Right ventricle myocardium inferior (tissue), 1 donor: ENCODE measurements at regions of chr4 and their contacts with region 1.

Region 1: GRCh38 chr4:25970226-25970675 is 56.2 kb downstream of the SMIM20 start:
- DNase-seq: peak; percentile 81
- ATAC-seq: peak; percentile 66

Region 2: GRCh38 chr4:25930731-25931354 is 39.4 kb before region 1 on chr4:
- intact Hi-C with region 1: loop called (anchors 5 kb)
- DNase-seq: no peak
- ATAC-seq: no peak

Region 3: GRCh38 chr4:26503427-26503826 is 533.2 kb after region 1 on chr4:
- intact Hi-C with region 1: no loop called
- DNase-seq: no peak
- ATAC-seq: no peak